Activated B cell treated with CpG ODN at 0.5 μM for 24 hours (primary cell): ENCODE measurements at regions of chr1 and their contacts with region 1.

Region 1: DNA sequence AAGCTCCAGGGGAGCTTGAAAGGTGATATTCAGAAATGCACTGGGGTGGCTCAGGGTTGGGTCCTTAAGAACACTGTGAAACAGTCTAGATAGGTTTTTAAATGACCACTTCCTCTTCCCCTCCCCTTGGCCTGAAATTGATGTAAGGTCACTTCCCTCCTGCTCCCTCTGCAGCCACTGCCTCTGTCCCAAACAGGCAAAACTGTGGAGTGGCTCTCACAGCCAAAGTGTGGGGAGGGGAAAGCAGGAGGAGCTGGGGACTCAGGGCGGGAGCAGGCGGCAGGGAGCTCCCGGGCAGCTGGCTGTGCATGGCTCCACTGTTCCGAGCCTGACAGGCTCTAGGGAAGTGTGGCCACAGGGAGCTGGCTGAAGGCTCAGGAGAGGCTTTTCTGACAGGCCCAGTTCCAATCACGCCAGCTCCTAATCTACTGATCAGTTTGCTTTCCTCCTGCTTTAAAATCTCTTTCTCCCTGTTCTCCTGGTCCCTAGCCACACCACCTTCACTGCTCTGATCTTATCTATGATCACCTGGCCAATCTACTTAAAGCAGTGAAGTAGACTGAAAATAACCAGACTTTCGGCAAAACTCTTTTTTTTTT is 5.1 kb upstream of the CSRP1 start:
- DNase-seq: no peak
- ATAC-seq: no peak
- H3K4me3 Mint-ChIP-seq: no peak overlapping the region
- H3K27ac Mint-ChIP-seq: no peak overlapping the region
- H3K4me1 Mint-ChIP-seq: peaks cover 19% of the 10 kb centered on the region
- H3K27me3 Mint-ChIP-seq: no peaks in the 10 kb centered on the region
- CTCF ChIP-seq: no peak

Region 2: DNA sequence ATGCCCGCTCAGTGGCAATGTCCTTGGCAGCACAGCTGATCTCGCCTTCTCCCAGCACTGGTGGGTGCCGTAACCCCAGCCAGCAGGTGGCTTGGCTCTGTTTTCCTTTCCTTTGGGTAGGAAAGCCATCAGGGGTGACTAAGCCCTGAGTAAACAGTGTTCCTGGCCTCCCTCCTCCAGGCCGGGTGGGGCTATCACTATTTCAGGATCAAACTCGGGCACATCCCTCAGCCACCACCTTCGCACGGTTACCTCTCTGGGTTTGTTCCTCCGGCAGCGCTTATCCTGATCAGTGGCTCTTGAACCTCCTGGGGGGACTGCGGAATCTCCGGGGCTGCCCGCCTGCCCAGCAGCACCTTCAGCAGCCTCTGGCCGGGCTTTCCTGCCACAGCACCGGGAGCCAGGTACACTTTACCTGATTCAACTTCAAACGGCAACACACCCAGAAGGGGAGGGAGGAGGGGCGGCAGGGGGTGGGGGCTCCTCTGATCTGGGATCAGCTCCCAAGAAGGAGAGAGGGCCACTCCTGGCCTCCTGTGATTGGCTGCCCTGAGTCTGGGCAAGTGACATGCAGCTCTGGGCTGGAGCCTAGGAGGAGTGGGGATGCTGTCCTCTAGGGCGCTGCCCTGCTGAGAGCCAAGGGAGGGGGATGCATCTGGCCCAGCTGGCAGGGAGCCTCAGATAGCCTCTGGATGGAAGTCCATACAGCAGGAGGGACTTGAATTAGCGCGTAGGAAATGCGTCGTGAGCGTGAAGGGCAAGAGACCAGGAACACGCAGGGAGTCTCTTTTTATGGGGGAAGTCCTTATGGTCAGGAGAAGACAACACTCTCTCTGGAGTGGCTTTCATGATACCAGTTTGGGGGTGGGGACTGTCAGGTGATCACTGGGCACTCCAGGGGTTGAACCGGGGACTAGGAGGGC is 384.9 kb before region 1 on chr1 and contains the start of gene ASCL5:
- CTCF ChIA-PET with region 1: no interaction called
- POLR2A ChIA-PET with region 1: no interaction called
- intact Hi-C with region 1: no loop called
- DNase-seq: no peak
- ATAC-seq: no peak
- H3K4me3 Mint-ChIP-seq: no peak within 1 kb of the TSS
- H3K27ac Mint-ChIP-seq: no peak within 1 kb of the TSS
- H3K4me1 Mint-ChIP-seq: no peaks in the 10 kb centered on the region
- H3K27me3 Mint-ChIP-seq: peaks cover 11% of the 10 kb centered on the region
- CTCF ChIP-seq: no peak
- total RNA-seq, gene ASCL5: not detected in 2 replicates

Region 3: GRCh38 chr1:201436393-201436792 is 75.6 kb before region 1 on chr1:
- CTCF ChIA-PET with region 1: interaction called, 11 read pairs
- POLR2A ChIA-PET with region 1: no interaction called
- intact Hi-C with region 1: loop called (anchors 1 kb)
- DNase-seq: no peak
- ATAC-seq: no peak
- H3K4me3 Mint-ChIP-seq: no peak overlapping the region
- H3K27ac Mint-ChIP-seq: no peak overlapping the region
- H3K4me1 Mint-ChIP-seq: peaks cover 5% of the 10 kb centered on the region
- H3K27me3 Mint-ChIP-seq: peaks cover 31% of the 10 kb centered on the region
- CTCF ChIP-seq: no peak

Region 4: DNA sequence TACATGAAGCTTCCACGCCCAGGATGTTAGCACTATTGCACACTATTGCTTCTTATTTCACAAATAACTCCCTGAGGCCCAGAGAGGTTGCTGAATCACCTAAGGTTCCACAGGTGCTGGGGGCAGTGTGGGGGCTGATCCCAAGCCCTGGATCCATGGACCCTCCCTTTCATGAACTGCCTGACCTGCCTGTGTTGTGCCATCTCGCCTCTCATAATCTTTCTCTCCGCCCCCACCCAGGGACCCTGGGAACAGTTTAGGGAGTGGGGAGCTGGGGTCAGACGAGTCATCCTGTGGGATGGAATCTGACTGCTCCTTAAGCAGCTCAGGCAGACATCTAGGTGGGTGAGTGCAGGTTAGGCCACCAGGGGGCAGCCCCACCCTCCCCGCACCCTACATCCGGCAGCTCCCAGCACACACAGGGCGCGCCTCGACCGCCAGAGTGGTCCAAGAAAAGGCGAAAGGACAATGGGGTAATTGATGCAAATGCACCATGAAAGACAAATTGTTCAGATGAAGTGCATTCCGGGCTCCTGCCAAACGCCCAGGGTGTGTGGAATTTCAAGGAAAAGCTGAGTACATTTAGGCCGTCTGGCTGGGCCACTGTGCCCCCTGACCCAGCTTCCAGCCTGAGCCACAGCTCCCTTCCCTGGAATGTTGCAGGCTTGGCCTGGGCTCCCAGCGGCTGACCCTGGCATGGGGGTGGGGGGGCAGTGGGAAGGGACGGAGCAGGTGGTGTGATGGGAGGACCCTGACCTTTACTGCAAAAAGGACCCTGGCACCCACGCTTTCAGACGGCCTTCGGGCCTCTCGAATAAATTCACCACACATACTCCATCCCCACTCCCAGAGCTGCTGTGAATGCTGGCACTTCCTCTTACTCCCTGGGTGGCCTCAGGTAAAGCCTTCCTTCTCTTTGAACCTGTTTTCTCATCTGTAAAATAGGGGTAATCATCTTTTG is 63.8 kb before region 1 on chr1:
- CTCF ChIA-PET with region 1: interaction called, 43 read pairs
- POLR2A ChIA-PET with region 1: interaction called, 3 read pairs
- intact Hi-C with region 1: loop called (anchors 1 kb)
- DNase-seq: peak; percentile 30
- ATAC-seq: peak; percentile 89
- H3K4me3 Mint-ChIP-seq: no peak overlapping the region
- H3K27ac Mint-ChIP-seq: no peak overlapping the region
- H3K4me1 Mint-ChIP-seq: peaks cover 9% of the 10 kb centered on the region
- H3K27me3 Mint-ChIP-seq: peaks cover 12% of the 10 kb centered on the region
- CTCF ChIP-seq: no peak

Region 5: GRCh38 chr1:201488817-201489589 is 23.0 kb before region 1 on chr1:
- CTCF ChIA-PET with region 1: interaction called, 219 read pairs
- POLR2A ChIA-PET with region 1: no interaction called
- intact Hi-C with region 1: no loop called
- DNase-seq: no peak
- ATAC-seq: no peak
- H3K4me3 Mint-ChIP-seq: no peak overlapping the region
- H3K27ac Mint-ChIP-seq: no peak overlapping the region
- H3K4me1 Mint-ChIP-seq: peaks cover 7% of the 10 kb centered on the region
- H3K27me3 Mint-ChIP-seq: no peaks in the 10 kb centered on the region
- CTCF ChIP-seq: no peak

Region 6: DNA sequence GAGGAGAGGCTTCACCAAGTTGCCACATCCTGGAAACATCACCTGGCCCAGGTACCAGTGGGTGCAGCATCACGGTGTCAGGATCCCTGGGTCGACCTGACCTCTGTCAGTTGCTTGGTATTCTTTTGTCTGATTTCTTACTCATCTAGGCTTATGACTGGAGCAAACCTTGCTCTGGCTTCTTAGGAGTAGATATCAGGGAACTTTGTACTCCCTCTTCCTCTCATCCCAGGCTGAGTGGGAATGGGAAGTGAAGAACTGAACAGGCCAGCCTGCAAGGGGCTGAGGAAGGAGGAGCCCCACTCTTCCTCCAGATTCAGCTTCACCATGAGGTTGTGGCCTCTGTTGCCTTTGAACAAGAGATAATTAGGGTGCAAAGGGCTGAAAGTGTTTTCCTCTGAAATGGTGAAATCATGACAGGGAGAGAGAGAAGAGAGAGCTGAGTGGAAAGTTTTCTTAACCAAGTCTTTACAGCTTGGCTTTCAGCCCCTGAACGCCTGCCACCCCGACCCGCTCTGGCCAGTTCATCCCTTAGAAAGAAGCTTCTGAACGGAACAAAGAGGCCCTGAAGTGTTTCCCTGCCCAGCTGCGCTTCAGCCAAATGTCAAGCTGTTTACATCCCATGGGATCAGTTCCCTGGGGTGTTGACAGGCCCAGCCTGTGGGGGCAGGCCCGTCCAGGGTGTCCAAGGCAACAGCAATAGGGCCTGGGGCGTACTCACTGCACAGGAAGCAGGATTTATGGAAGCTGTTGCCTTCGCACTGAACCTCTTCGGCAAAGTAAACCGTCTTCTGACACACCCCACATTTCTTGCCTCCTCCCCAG is 16.4 kb before region 1 on chr1:
- CTCF ChIA-PET with region 1: interaction called, 18 read pairs
- POLR2A ChIA-PET with region 1: no interaction called
- intact Hi-C with region 1: no loop called
- DNase-seq: no peak
- ATAC-seq: no peak
- H3K4me3 Mint-ChIP-seq: no peak overlapping the region
- H3K27ac Mint-ChIP-seq: no peak overlapping the region
- H3K4me1 Mint-ChIP-seq: no peaks in the 10 kb centered on the region
- H3K27me3 Mint-ChIP-seq: no peaks in the 10 kb centered on the region
- CTCF ChIP-seq: no peak

Region 7: DNA sequence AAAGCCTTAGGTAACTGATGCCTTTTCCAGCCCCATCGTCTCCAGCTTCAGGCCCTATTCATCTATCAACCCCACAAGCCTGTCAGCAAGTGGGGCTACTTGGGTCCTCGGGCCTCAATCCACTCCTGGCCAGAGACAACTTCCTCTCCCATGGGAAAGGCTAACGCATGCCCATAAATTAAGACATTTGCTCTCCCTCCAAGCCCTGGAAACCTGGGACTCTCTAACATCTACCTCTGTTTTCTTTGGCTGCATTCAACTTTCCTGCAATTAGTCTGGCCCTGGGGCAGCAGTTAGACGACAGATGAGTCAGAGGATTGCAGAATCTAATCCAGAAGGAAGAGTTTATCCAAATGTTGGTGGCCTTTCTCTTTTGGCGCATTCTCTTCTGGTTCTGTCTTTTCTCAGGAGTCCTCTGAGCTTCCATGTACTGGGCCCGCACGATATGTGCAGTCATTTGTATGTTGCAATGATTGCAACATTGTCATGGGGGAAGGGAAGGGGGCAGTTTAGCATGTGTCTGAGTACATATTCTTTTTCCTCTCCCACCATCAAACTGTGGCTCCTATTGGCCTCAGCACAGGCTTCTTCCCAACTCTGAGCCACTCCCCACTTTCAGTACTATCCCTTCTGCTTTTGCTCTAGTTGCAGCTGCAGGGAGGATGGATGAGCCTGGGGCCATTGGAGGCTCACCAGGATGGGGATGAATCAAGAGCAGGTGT is 81.3 kb after region 1 on chr1:
- CTCF ChIA-PET with region 1: no interaction called
- POLR2A ChIA-PET with region 1: no interaction called
- intact Hi-C with region 1: no loop called
- DNase-seq: no peak
- ATAC-seq: no peak
- H3K4me3 Mint-ChIP-seq: no peak overlapping the region
- H3K27ac Mint-ChIP-seq: no peak overlapping the region
- H3K4me1 Mint-ChIP-seq: no peaks in the 10 kb centered on the region
- H3K27me3 Mint-ChIP-seq: peaks cover 3% of the 10 kb centered on the region
- CTCF ChIP-seq: no peak